ENCODE measurements at regions of chr2 and their contacts with region 1.

Region 1: GRCh38 chr2:88627056-88627855 is at the start of gene EIF2AK3:
- DNase-seq: peak; percentile 98
- ATAC-seq: peak; percentile 96
- total RNA-seq, gene EIF2AK3: 4.3 TPM

Region 2: GRCh38 chr2:88281302-88282217 is 345.7 kb before region 1 on chr2:
- intact Hi-C with region 1: no loop called
- DNase-seq: no peak
- ATAC-seq: peak; percentile 69

Region 3: GRCh38 chr2:88521445-88522073 is 105.7 kb before region 1 on chr2:
- intact Hi-C with region 1: no loop called
- DNase-seq: no peak
- ATAC-seq: no peak

Region 4: GRCh38 chr2:88590998-88591613 is 36.1 kb before region 1 on chr2:
- intact Hi-C with region 1: loop called (anchors 5 kb)
- DNase-seq: no peak
- ATAC-seq: peak; percentile 76

Region 5: GRCh38 chr2:88600038-88600465 is 27.2 kb before region 1 on chr2:
- intact Hi-C with region 1: loop called (anchors 2 kb)
- DNase-seq: no peak
- ATAC-seq: peak; percentile 69

Region 6: GRCh38 chr2:88659538-88659916 is 32.3 kb after region 1 on chr2:
- intact Hi-C with region 1: loop called (anchors 2 kb)
- DNase-seq: no peak
- ATAC-seq: peak; percentile 86

Region 7: DNA sequence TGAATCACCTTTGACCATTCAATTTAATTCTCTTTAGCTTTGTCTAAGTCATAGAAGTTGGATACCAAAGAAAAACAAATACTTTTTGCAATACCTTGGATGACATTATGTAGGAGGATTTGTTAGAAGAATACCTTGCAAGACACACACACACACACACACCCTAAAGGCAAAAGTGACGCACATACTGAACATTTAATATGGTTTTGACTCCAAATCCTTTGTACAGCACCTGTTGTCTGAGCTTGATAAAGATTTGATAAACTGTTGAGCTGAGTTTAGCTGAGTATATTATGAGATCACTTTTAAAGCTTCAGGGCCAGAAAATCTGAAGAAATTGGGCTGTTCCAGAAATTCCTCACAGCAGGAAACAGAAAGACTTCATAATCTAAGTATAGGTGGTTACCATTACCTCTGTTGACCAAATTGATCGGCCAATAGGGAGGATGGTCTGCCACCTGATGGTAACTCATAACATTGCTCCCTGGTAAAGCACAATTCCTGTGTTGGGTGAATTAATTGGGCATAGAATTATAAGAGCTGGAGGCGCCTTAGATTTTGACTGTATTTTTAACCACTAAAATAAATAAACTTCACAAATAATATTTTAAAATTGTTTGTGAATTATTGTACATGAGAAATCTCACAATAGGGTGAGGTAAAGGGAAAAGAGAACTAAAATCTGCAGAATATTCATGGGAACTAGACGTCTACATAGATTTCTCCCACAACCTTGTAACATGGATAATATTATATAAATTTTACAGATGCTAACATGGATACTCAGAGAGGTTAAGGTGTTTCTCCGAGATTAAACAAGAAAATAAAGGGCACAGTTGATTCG is 42.3 kb after region 1 on chr2:
- intact Hi-C with region 1: loop called (anchors 5 kb)
- DNase-seq: no peak
- ATAC-seq: peak; percentile 62

Region 8: GRCh38 chr2:88691339-88692183 is 64.3 kb after region 1 on chr2 and contains the start of gene RPIA:
- intact Hi-C with region 1: loop called (anchors 1 kb)
- DNase-seq: peak; percentile 99
- ATAC-seq: peak; percentile 99
- total RNA-seq, gene RPIA: 15.8 TPM

Region 9: GRCh38 chr2:88739985-88740600 is 112.8 kb after region 1 on chr2:
- intact Hi-C with region 1: loop called (anchors 5 kb)
- DNase-seq: no peak
- ATAC-seq: peak; percentile 79